Activated T-helper 1 cell treated with anti-CD3 and anti-CD28 coated beads, Interleukin-12 subunit alpha, Interleukin-12 subunit beta, Interleukin-2, Interleukin-4 antibody, amounts not matched to agents 30 ng/mL and 10 ng/mL and 1 ng/mL, durations not matched to agents 14 hours and 24 hours and 36 hours (primary cell): ENCODE measurements at regions of chr12 and their contacts with region 1.

Region 1: GRCh38 chr12:118357257-118358007 is 15.3 kb downstream of the TAOK3 start:
- DNase-seq: no peak
- H3K4me3 Mint-ChIP-seq: peak overlapping the region; percentile 99
- H3K27ac Mint-ChIP-seq: peak overlapping the region; percentile 95
- H3K4me1 Mint-ChIP-seq: peaks cover 58% of the 10 kb centered on the region
- H3K27me3 Mint-ChIP-seq: no peaks in the 10 kb centered on the region

Region 2: DNA sequence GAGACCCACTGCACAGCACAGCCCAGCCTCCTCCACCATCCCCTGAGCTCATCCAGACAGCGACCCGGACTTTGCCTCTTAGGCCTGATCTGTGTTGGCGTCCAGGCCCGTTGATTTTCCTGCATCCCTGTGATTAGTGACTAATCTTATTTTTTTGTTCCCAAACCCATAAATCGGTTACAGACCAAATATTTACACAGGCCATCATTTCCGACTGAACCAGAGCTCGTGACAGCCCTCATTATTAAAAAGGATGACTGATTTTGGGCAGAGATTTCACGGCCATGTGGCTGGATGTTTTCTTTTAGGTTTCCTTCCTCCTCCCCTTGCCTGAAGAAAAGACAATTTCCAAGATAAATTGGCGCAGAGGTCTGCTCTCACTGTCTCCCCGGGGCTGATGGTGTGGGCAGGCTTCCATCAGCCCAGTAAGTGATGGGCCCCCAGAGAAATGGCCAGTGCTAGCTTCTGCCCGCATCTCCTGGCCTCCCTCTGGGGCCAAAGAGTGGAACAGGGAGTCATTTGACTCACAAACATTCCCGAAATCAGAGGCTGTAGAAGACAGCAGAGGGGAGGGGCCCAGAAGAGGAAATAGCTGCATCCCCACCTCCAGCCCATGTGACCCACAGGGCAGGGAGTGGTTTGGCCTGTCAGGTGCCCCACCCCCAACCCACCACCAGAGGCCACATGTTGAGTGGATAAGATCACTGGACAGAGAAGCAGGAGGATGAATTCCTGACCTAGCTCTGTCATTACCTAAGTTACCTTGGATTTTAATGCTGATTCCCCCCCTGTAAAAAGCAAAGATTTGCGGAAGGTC is 672.1 kb before region 1 on chr12:
- intact Hi-C with region 1: no loop called
- DNase-seq: no peak
- H3K4me3 Mint-ChIP-seq: no peak overlapping the region
- H3K27ac Mint-ChIP-seq: no peak overlapping the region
- H3K4me1 Mint-ChIP-seq: no peaks in the 10 kb centered on the region
- H3K27me3 Mint-ChIP-seq: no peaks in the 10 kb centered on the region

Region 3: DNA sequence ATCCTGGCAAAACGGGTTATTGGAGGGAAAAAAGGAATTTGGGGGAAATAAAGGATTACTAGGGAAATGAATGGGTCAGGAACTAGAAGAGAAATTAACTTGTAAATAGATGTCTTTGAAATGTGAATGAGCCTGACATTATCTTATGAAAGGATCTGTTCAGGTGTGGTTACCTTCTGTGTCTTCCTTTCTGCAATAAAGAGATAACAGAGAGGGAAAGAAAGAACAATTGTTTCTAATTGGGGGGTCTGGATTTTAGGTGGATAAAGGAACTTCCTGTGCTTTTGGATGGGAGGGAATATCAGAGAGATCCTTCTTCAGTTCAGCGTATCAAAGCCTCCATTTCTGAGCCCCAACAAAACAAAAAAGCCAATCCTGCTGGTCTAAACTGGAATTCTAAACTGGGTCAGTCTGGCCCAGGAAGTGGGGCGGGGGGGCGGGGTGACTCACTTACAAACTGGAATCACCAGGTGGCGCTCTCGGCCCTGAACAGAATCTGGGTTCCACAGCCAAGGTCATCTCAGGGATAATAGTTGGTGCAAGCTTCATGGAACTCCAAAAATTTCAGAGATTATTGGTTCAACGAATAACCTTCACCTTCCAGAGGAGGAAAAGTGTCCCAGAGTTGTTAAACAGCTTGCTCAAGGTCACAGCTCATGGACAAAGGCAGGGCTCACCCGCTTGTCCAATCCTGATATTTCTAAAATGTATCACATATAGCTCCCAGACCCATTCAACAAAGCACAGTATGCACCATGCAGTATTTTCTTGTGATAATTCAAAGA is 236.7 kb before region 1 on chr12:
- intact Hi-C with region 1: loop called (anchors 5 kb)
- DNase-seq: peak; percentile 28
- H3K4me3 Mint-ChIP-seq: no peak overlapping the region
- H3K27ac Mint-ChIP-seq: no peak overlapping the region
- H3K4me1 Mint-ChIP-seq: peaks cover 14% of the 10 kb centered on the region
- H3K27me3 Mint-ChIP-seq: peaks cover 2% of the 10 kb centered on the region

Region 4: GRCh38 chr12:118183705-118184104 is 173.7 kb before region 1 on chr12:
- intact Hi-C with region 1: loop called (anchors 5 kb)
- DNase-seq: no peak
- H3K4me3 Mint-ChIP-seq: no peak overlapping the region
- H3K27ac Mint-ChIP-seq: no peak overlapping the region
- H3K4me1 Mint-ChIP-seq: peaks cover 9% of the 10 kb centered on the region
- H3K27me3 Mint-ChIP-seq: no peaks in the 10 kb centered on the region

Region 5: GRCh38 chr12:118290130-118290529 is 67.3 kb before region 1 on chr12:
- intact Hi-C with region 1: no loop called
- DNase-seq: no peak
- H3K4me3 Mint-ChIP-seq: no peak overlapping the region
- H3K27ac Mint-ChIP-seq: no peak overlapping the region
- H3K4me1 Mint-ChIP-seq: no peaks in the 10 kb centered on the region
- H3K27me3 Mint-ChIP-seq: no peaks in the 10 kb centered on the region

Region 6: DNA sequence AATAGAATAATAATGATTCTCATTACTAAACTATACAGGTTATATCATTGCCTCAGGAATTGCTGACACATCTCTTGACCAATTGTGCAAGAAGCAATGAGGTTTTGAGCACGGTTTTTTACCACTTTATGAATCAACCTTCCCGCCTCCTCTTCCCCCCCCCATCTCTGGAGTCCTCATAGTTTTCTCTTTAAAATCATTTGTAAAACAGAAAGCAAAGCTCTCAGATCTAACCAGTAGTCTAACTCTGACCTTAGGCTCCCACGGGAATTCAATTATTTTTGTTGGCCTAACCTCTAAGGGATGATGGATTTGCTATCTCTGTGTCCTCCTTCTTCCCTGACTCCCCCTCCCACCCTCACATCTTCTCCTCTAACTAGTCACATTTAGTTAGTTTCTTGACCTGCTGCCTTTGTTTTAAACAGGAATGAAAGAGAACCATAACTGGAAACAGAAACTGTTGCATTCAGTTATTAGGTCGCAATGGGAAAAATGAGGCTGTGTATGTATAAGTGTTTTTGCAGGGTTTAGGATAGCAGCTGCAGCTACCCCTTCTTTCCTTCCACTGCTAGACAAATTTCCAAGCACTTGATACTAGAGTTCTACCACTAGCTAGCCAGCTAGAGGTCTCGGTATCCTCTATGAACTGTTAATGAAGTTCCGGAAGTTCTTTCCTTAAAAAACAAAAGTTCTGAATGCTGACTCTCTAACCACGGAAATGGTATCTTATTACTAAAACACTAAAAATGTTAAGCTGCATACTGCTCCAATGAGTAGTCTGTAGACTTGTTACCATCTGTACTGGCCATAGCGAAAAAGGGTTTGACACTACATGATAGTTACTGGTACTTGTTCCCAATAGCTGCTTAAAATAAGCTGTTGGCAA is 50.1 kb before region 1 on chr12:
- intact Hi-C with region 1: loop called (anchors 1 kb)
- DNase-seq: peak; percentile 2
- H3K4me3 Mint-ChIP-seq: peak overlapping the region; percentile 70
- H3K27ac Mint-ChIP-seq: peak overlapping the region; percentile 62
- H3K4me1 Mint-ChIP-seq: peaks cover 33% of the 10 kb centered on the region
- H3K27me3 Mint-ChIP-seq: no peaks in the 10 kb centered on the region